GM23248 (cell line): ENCODE measurements at regions of chr9 and their contacts with region 1.

Region 1: GRCh38 chr9:131739980-131740648 is at the start of gene RAPGEF1:
- DNase-seq: peak; percentile 76
- H3K4me3 ChIP-seq: peak within 1 kb of the TSS; percentile 79
- H3K27ac ChIP-seq: peak within 1 kb of the TSS; percentile 37
- H3K4me1 ChIP-seq: peaks cover 10% of the 10 kb centered on the region; the same call in 1 of the 2 replicates
- H3K27me3 ChIP-seq: no peaks in the 10 kb centered on the region
- total RNA-seq, gene RAPGEF1: 21.1 and 24.1 TPM in 2 replicates

Region 2: GRCh38 chr9:131349881-131350563 is 390.1 kb before region 1 on chr9:
- in situ Hi-C with region 1: loop called (anchors 25 kb)
- DNase-seq: peak; percentile 93
- H3K4me3 ChIP-seq: peak overlapping the region; percentile 60
- H3K27ac ChIP-seq: no peak overlapping the region
- H3K4me1 ChIP-seq: no peaks in the 10 kb centered on the region
- H3K27me3 ChIP-seq: no peaks in the 10 kb centered on the region

Region 3: DNA sequence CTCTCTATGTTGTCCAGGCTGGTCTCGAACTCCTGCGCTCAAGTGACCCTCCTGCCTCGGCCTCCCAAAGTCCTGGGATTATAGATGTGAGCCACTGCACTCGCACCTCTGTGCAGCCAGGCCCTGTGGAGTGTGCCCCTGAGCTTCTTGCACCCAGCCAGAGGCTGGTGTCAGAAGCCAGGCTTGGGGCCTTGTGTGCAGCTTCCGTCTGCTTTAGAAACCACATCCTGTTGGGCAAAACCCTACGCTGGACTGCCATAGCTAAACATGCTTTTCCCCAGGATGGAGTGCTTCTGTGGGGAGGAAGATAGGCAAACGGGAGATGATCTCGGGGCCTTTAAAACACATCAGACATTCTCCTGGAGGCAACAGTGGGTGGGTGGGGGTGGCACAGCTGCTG is 154.7 kb before region 1 on chr9:
- in situ Hi-C with region 1: loop called (anchors 5 kb)
- DNase-seq: no peak
- H3K4me3 ChIP-seq: no peak overlapping the region
- H3K27ac ChIP-seq: no peak overlapping the region
- H3K4me1 ChIP-seq: no peaks in the 10 kb centered on the region
- H3K27me3 ChIP-seq: no peaks in the 10 kb centered on the region